Panc1 (cell line): ENCODE measurements at regions of chr14 and their contacts with region 1.

Region 1: GRCh38 chr14:39232554-39233415 is 930 bp upstream of the MIA2 start:
- DNase-seq: no peak
- ATAC-seq: no peak; the same call in 1 of the 2 replicates
- H3K4me3 ChIP-seq: no peak overlapping the region
- H3K27ac ChIP-seq: no peak overlapping the region
- H3K4me1 ChIP-seq: 0 out of 2 replicates have a peak, but pooled peaks cover 3% of the 10 kb centered on the region
- H3K27me3 ChIP-seq: no peaks in the 10 kb centered on the region
- CTCF ChIP-seq: no peak

Region 2: DNA sequence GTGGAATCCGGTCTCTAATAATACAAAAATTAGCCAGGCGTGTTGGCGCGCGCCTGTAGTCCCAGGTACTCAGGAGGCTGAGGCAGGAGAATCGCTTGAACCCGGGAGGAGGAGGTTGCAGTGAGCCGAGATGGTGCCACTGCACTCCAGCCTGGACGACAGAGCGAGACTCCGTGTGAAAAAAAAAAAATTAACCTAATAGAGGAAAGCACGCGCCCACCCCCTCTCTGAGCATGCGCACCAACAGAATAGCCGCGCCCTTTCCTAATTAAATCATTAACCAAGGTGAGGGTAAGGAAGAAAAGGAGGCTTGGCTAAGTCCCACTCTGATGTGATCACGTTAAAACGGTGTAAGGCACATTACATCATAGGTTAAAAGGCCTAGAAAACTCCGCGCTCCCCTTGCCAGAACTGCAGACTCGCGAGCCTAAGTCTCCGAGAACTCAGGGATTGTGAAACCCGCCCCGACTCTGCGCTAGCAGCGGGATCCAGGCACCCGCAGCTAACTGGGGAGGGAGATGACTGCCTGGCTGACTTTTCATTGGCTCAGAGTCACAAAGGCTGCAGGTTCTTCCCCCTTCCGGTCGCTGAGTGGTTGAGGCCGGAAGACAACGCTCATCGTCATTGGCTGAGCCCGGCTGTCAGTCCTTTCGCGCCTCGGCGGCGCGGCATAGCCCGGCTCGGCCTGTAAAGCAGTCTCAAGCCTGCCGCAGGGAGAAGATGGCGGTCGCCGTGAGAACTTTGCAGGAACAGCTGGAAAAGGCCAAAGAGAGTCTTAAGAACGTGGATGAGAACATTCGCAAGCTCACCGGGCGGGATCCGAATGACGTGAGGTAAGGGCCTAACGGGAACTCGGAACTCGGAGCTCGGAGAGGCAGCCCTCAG is 58.0 kb before region 1 on chr14 and contains the start of gene PNN:
- CTCF ChIA-PET with region 1: no interaction called
- POLR2A ChIA-PET with region 1: no interaction called
- in situ Hi-C with region 1: no loop called
- intact Hi-C with region 1: no loop called
- DNase-seq: peak; percentile 97
- ATAC-seq: peak; percentile 95
- H3K4me3 ChIP-seq: peak within 1 kb of the TSS; percentile 92 to 95
- H3K27ac ChIP-seq: peak within 1 kb of the TSS; percentile 97
- H3K4me1 ChIP-seq: peaks cover 22% of the 10 kb centered on the region
- H3K27me3 ChIP-seq: no peaks in the 10 kb centered on the region
- CTCF ChIP-seq: no peak
- total RNA-seq, gene PNN: 55.4 TPM

Region 3: GRCh38 chr14:39368261-39368959 is 135.6 kb after region 1 on chr14:
- CTCF ChIA-PET with region 1: no interaction called
- POLR2A ChIA-PET with region 1: no interaction called
- in situ Hi-C with region 1: no loop called
- intact Hi-C with region 1: loop called (anchors 5 kb)
- DNase-seq: no peak
- ATAC-seq: peak; percentile 70; the same call in 1 of the 2 replicates
- H3K4me3 ChIP-seq: no peak overlapping the region
- H3K27ac ChIP-seq: no peak overlapping the region
- H3K4me1 ChIP-seq: no peaks in the 10 kb centered on the region; the same call in 1 of the 2 replicates
- H3K27me3 ChIP-seq: no peaks in the 10 kb centered on the region
- CTCF ChIP-seq: peak; percentile 62

Region 4: GRCh38 chr14:39432179-39432618 is 199.4 kb after region 1 on chr14 and contains the start of gene FBXO33:
- CTCF ChIA-PET with region 1: no interaction called
- POLR2A ChIA-PET with region 1: no interaction called
- in situ Hi-C with region 1: no loop called
- intact Hi-C with region 1: loop called (anchors 5 kb)
- DNase-seq: peak; percentile 74
- ATAC-seq: peak; percentile 96
- H3K4me3 ChIP-seq: peak within 1 kb of the TSS; percentile 72 to 88
- H3K27ac ChIP-seq: peak within 1 kb of the TSS; percentile 92
- H3K4me1 ChIP-seq: peaks cover 12% of the 10 kb centered on the region
- H3K27me3 ChIP-seq: no peaks in the 10 kb centered on the region
- CTCF ChIP-seq: no peak
- total RNA-seq, gene FBXO33: 6.6 TPM